ENCODE measurements at regions of chr7 and their contacts with region 1.

Region 1: GRCh38 chr7:134316539-134317344 is at the start of gene SLC35B4:
- DNase-seq: peak; percentile 91
- H3K4me3 Mint-ChIP-seq: peak within 1 kb of the TSS; percentile 88
- H3K27ac Mint-ChIP-seq: peak within 1 kb of the TSS; percentile 81
- H3K4me1 Mint-ChIP-seq: peaks cover 15% of the 10 kb centered on the region
- H3K27me3 Mint-ChIP-seq: peaks cover 8% of the 10 kb centered on the region
- total RNA-seq, gene SLC35B4: 22.8 and 23.1 TPM in 2 replicates

Region 2: GRCh38 chr7:133252858-133253518 is 1063.8 kb before region 1 on chr7 and contains the start of gene EXOC4:
- intact Hi-C with region 1: loop called (anchors 2 kb)
- DNase-seq: peak; percentile 92
- H3K4me3 Mint-ChIP-seq: peak within 1 kb of the TSS; percentile 94
- H3K27ac Mint-ChIP-seq: peak within 1 kb of the TSS; percentile 87
- H3K4me1 Mint-ChIP-seq: peaks cover 22% of the 10 kb centered on the region
- H3K27me3 Mint-ChIP-seq: peaks cover 3% of the 10 kb centered on the region
- total RNA-seq, gene EXOC4: 65.0 and 70.5 TPM in 2 replicates

Region 3: DNA sequence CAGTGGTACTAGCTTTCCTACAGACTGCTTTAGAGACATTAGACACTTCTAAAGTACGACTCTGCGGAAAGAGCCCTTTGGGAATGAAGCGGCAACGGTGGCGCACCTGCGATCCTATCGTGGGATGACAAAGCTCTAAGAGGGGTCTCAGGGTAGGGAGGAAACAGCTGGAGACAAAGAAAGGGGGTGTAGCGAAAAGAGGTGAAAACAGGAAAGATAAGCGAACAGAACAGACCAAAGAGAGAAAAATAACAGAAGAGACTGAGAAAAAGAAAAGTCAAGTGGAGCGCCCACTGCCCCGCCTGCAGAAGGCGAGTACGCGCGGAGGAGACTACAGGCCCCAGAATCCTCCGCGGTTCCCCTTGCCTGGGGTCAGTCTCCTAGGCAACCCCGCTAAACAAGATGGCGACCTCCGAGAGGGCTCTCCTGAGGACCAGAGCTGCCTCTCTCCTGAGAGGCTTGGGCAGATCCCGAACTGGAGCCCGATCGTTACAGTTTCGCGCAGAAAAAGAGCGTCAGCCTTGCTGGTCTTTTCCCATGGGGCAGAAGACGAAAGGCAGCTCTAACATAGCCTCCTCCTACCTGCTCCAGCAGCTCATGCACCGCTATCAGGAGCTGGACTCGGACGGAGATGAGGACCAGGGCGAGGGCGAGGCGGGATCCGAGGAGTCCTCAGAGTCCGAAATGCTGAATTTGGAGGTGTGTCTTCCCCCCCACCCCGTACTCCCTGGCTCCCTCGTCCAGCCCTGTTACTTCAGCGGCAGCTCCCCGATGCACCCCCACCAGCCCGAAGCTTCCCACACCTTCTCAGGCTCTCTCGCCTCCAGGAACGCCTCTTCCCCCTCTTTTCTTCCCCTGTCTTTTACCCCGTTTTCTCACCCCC is 189.5 kb before region 1 on chr7 and contains the start of gene LRGUK:
- intact Hi-C with region 1: loop called (anchors 1 kb)
- DNase-seq: peak; percentile 72
- H3K4me3 Mint-ChIP-seq: peak within 1 kb of the TSS; percentile 83
- H3K27ac Mint-ChIP-seq: no peak within 1 kb of the TSS
- H3K4me1 Mint-ChIP-seq: peaks cover 10% of the 10 kb centered on the region
- H3K27me3 Mint-ChIP-seq: peaks cover 35% of the 10 kb centered on the region
- total RNA-seq, gene LRGUK: 0.11 and 0.16 TPM in 2 replicates

Region 4: GRCh38 chr7:134355927-134356326 is 39.2 kb after region 1 on chr7:
- intact Hi-C with region 1: loop called (anchors 5 kb)
- DNase-seq: no peak
- H3K4me3 Mint-ChIP-seq: no peak overlapping the region
- H3K27ac Mint-ChIP-seq: no peak overlapping the region
- H3K4me1 Mint-ChIP-seq: peaks cover 2% of the 10 kb centered on the region
- H3K27me3 Mint-ChIP-seq: no peaks in the 10 kb centered on the region

Region 5: DNA sequence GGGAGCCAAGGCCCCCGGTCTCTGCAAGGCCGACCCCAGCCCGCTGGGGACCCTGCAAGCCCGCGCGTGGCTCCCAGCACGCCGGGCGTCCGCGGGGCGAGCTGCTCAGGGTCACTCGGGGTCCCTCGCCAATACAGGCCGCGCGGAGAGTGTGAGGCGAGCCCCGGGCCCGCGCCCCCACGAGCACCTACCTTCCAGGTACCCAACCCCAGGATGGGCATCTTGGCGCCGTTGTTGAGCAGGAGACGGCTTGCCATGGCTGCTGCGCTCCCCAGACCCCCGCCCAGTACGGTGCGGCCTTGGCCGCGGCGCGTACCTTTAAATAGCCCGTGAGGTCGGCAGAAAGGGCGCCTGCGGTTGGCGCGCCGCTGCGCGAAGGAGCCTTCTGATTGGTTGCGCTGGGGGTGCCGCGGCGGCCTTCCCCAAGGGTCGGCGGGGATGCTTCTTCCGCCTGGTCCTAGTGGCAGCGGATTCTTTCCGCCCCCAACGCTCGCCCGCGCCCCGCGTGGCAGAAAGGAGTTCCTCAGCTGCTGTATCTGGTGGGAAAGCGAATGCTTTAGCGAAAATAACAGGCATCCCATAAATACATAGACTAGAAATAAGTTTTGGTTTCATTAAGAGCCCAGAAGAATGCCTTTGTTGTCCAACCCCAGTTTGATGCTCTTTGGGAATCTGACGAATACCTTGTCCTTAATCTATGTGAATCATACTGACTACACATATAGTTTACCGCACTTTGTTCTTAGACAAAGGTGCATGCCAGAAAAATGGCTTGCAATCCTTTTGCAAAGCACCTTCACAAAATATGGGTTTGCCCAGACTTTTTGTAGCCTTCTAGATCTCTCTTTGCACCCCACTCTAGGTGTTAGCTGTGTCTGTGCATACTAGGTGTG is 142.3 kb after region 1 on chr7 and contains the start of gene AKR1B1:
- intact Hi-C with region 1: loop called (anchors 1 kb)
- DNase-seq: peak; percentile 85
- H3K4me3 Mint-ChIP-seq: peak within 1 kb of the TSS; percentile 82
- H3K27ac Mint-ChIP-seq: peak within 1 kb of the TSS; percentile 64
- H3K4me1 Mint-ChIP-seq: peaks cover 31% of the 10 kb centered on the region
- H3K27me3 Mint-ChIP-seq: no peaks in the 10 kb centered on the region
- total RNA-seq, gene AKR1B1: 102 and 107 TPM in 2 replicates